WTC11 (cell line): ENCODE measurements at regions of chr4 and their contacts with region 1.

Region 1: DNA sequence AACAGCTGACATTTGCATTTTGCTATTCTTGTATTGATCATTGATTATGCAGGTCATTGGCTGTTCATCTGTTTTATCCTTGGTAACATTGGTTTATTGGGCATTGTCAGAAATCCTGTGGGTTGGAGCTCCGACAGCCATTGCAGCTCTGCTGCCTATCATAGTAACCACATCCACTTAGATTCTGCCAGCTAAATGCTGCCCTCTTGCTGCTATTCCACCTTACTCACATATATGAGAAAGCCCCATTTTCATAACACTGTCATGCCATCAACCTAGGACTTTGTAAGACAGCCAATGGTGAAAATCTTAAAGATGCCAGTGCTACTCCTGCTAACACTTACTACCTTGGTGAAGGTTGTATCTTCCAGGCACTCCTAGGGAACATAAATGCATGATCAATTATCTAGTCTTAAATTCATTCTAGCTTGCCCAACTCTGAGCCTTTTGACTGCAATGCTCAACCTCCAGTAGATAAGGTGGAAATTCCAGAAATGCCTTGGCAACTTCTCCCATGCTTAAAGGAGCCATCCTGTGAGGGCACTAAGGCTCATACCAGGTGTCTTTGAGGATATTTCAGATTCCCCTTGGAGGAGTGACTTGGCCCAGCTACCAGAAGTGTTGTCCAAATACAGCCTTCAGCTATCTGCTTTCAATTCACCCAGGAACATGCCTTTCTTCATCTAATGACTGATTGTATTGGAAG is 187.1 kb upstream of the CXCL13 start:
- DNase-seq: no peak
- ATAC-seq: peak; percentile 83
- H3K4me3 Mint-ChIP-seq: no peak overlapping the region
- H3K27ac Mint-ChIP-seq: no peak overlapping the region
- H3K4me1 Mint-ChIP-seq: no peaks in the 10 kb centered on the region
- H3K27me3 Mint-ChIP-seq: no peaks in the 10 kb centered on the region
- CTCF ChIP-seq: no peak

Region 2: DNA sequence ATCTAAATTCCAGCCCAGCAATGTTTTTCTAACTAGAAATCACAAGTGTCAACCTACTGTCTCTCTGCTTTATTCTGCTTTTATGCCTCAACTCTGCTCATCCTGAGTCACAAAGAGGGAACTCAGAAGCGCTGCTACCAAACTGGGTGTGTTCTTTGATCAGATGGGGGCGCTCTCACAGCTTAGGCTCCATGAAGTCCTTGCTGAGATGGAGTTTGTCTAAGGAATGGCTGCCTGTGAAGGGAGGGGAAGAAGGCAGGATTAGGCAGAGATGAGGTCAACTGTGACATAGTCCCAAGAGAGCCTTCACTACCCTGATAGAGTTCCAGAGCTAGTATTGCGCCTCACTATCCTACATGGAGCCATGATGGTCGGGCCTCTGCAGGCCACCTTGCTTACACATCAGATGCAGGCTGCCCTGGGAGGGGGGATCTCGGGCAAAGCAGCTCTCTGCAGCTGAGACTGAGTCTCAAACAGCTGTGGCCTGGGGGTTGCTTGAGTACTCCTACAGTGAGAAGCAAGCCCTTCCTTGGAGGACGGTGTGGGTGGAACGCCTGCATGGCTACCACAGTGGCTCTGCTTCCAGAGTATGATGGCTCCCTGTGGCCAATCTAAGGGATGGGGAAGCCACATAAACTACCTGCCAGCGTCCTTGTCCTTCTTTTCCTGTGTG is 41.6 kb before region 1 on chr4:
- CTCF ChIA-PET with region 1: interaction called, 14 read pairs
- POLR2A ChIA-PET with region 1: no interaction called
- DNase-seq: peak; percentile 35
- ATAC-seq: peak; percentile 78
- H3K4me3 Mint-ChIP-seq: no peak overlapping the region
- H3K27ac Mint-ChIP-seq: no peak overlapping the region
- H3K4me1 Mint-ChIP-seq: peaks cover 20% of the 10 kb centered on the region
- H3K27me3 Mint-ChIP-seq: no peaks in the 10 kb centered on the region
- CTCF ChIP-seq: no peak

Region 3: GRCh38 chr4:77385124-77385969 is 33.1 kb before region 1 on chr4:
- CTCF ChIA-PET with region 1: interaction called, 28 read pairs
- POLR2A ChIA-PET with region 1: no interaction called
- DNase-seq: peak; percentile 72
- ATAC-seq: peak; percentile 87
- H3K4me3 Mint-ChIP-seq: no peak overlapping the region
- H3K27ac Mint-ChIP-seq: no peak overlapping the region
- H3K4me1 Mint-ChIP-seq: peaks cover 15% of the 10 kb centered on the region
- H3K27me3 Mint-ChIP-seq: no peaks in the 10 kb centered on the region
- CTCF ChIP-seq: peak; percentile 83

Region 4: GRCh38 chr4:77758804-77759203 is 340.3 kb after region 1 on chr4:
- CTCF ChIA-PET with region 1: no interaction called
- POLR2A ChIA-PET with region 1: no interaction called
- DNase-seq: no peak
- ATAC-seq: no peak
- H3K4me3 Mint-ChIP-seq: no peak overlapping the region
- H3K27ac Mint-ChIP-seq: no peak overlapping the region
- H3K4me1 Mint-ChIP-seq: no peaks in the 10 kb centered on the region
- H3K27me3 Mint-ChIP-seq: no peaks in the 10 kb centered on the region; the same call in 1 of the 2 replicates
- CTCF ChIP-seq: no peak